ENCODE measurements at regions of chr17 and their contacts with region 1.

Region 1: DNA sequence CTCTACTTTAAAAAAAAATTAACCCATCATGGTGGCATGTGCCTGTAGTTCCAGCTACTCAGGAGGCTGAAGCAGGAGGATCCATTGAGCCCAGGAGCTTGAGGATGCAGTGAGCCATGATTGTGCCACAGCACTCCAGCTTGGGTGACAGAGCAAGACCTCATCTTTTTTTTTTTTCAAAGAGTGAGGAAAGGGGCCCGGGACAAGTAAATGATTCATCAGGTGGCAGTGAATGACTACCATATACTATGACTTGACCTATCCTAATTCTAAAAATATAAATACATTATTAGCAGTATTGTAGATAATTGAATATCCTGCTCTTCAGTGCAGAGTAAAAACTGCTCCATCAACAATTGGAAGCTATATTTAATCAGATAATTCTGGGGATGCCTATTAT is 55.3 kb downstream of the CLUH start:
- DNase-seq: no peak
- ATAC-seq: no peak
- H3K4me3 ChIP-seq: no peak overlapping the region
- H3K27ac ChIP-seq: no peak overlapping the region
- H3K4me1 ChIP-seq: peaks cover 2% of the 10 kb centered on the region
- H3K27me3 ChIP-seq: no peaks in the 10 kb centered on the region
- CTCF ChIP-seq: no peak

Region 2: DNA sequence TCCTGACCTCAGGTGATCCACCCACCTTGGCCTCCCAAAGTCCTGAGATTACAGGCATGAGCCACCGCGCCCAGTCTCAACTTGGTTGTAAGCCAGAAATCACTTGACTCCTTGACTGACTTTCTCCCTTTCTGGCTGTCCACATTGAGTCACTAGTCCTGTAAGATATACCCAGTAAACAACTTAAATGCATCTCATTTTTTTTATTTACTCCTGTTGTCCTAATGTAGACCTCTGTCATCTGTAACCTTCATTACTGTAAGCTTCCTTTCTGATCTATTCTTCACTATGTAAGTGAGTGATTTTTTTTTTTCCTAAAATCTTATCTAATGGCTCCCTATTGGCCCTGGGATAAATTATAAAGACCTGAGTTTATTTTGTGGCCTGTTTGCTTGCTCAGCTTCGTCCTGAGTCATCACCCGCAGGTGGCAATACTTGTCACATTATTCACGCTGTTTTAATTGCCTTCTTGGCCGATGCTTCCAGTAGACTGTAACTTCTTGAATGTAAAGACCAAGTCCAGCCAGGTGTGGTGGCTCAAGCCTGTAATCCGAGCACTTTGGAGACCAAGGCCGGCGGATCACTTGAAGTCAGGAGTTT is 21.8 kb before region 1 on chr17:
- CTCF ChIA-PET with region 1: no interaction called
- POLR2A ChIA-PET with region 1: no interaction called
- intact Hi-C with region 1: loop called (anchors 2 kb)
- DNase-seq: peak; percentile 88
- ATAC-seq: peak; percentile 93
- H3K4me3 ChIP-seq: no peak overlapping the region
- H3K27ac ChIP-seq: peak overlapping the region; percentile 63
- H3K4me1 ChIP-seq: peaks cover 18% of the 10 kb centered on the region
- H3K27me3 ChIP-seq: no peaks in the 10 kb centered on the region
- CTCF ChIP-seq: no peak

Measured in PC-3 (cell line).